Caco-2 (cell line): ENCODE measurements at regions of chr13 and their contacts with region 1.

Region 1: GRCh38 chr13:110715395-110716235 is 2.1 kb downstream of the ING1 start:
- DNase-seq: peak; percentile 98 to 100
- H3K4me3 ChIP-seq: peak overlapping the region; percentile 93
- H3K4me3 Mint-ChIP-seq: peak overlapping the region; percentile 100
- H3K27ac Mint-ChIP-seq: peak overlapping the region; percentile 96
- H3K4me1 ChIP-seq: peaks cover 16% of the 10 kb centered on the region; the same call in 1 of the 2 replicates
- H3K4me1 Mint-ChIP-seq: peaks cover 17% of the 10 kb centered on the region
- H3K27me3 ChIP-seq: no peaks in the 10 kb centered on the region
- H3K27me3 Mint-ChIP-seq: peaks cover 2% of the 10 kb centered on the region
- CTCF ChIP-seq: peak in 1 of 2 experiments; percentile 18

Region 2: DNA sequence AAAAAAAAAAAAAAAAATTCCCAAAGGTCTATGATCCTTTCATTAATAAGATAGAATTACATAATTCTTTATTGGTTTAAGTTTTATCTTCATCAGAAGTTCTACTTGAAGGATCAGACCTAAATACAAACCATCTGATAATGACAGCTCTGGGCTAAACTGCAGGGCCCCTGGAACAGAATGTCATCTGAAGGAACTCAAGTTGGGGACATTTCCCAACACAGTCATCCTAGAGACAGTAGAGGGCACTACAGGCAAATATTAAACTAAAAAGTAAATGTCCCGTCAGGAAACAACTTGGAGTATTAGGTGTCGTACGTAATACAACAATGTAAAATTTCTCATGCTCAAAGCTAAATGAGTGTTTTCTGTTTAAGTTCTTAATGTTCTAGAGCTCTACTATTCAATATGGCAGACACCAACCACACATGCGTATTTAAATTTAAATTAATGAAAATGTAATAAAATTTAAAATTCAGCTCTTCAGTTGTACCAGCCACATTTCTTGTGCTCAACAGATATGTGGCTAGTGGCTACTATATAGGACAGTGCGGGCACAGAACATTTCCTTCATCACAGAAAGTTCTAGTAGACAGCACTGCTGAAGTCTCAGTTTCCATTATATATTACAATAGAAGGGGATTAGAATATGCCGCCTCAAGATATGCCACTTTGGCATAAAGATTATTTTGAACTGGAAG is 122.0 kb before region 1 on chr13:
- CTCF ChIA-PET with region 1: interaction called, 5 read pairs
- POLR2A ChIA-PET with region 1: interaction called, 5 read pairs
- intact Hi-C with region 1: loop called (anchors 2 kb)
- DNase-seq: peak in 1 of 2 experiments; percentile 67
- H3K4me3 ChIP-seq: no peak overlapping the region
- H3K4me3 Mint-ChIP-seq: no peak overlapping the region
- H3K27ac Mint-ChIP-seq: no peak overlapping the region
- H3K4me1 ChIP-seq: peaks cover 12% of the 10 kb centered on the region
- H3K4me1 Mint-ChIP-seq: peaks cover 23% of the 10 kb centered on the region
- H3K27me3 ChIP-seq: no peaks in the 10 kb centered on the region
- H3K27me3 Mint-ChIP-seq: no peaks in the 10 kb centered on the region
- CTCF ChIP-seq: peak; percentile 63 to 64

Region 3: GRCh38 chr13:110615322-110616102 is 100.1 kb before region 1 on chr13 and contains the start of gene NAXD:
- CTCF ChIA-PET with region 1: interaction called, 6 read pairs
- POLR2A ChIA-PET with region 1: interaction called, 7 read pairs
- intact Hi-C with region 1: loop called (anchors 2 kb)
- DNase-seq: peak; percentile 97 to 98
- H3K4me3 ChIP-seq: peak within 1 kb of the TSS; percentile 96
- H3K4me3 Mint-ChIP-seq: peak within 1 kb of the TSS; percentile 88
- H3K27ac Mint-ChIP-seq: peak within 1 kb of the TSS; percentile 96
- H3K4me1 ChIP-seq: peaks cover 33% of the 10 kb centered on the region
- H3K4me1 Mint-ChIP-seq: peaks cover 5% of the 10 kb centered on the region
- H3K27me3 ChIP-seq: no peaks in the 10 kb centered on the region
- H3K27me3 Mint-ChIP-seq: no peaks in the 10 kb centered on the region
- CTCF ChIP-seq: no peak
- total RNA-seq, gene NAXD: 48.8 and 51.5 TPM in 2 replicates

Region 4: GRCh38 chr13:110665491-110666254 is 49.9 kb before region 1 on chr13:
- CTCF ChIA-PET with region 1: no interaction called
- POLR2A ChIA-PET with region 1: no interaction called
- intact Hi-C with region 1: no loop called
- DNase-seq: no peak
- H3K4me3 ChIP-seq: no peak overlapping the region
- H3K4me3 Mint-ChIP-seq: no peak overlapping the region
- H3K27ac Mint-ChIP-seq: no peak overlapping the region
- H3K4me1 ChIP-seq: no peaks in the 10 kb centered on the region
- H3K4me1 Mint-ChIP-seq: no peaks in the 10 kb centered on the region
- H3K27me3 ChIP-seq: no peaks in the 10 kb centered on the region
- H3K27me3 Mint-ChIP-seq: no peaks in the 10 kb centered on the region
- CTCF ChIP-seq: no peak

Region 5: GRCh38 chr13:110680851-110681250 is 34.8 kb before region 1 on chr13:
- CTCF ChIA-PET with region 1: interaction called, 3 read pairs
- POLR2A ChIA-PET with region 1: interaction called, 4 read pairs
- intact Hi-C with region 1: loop called (anchors 1 kb)
- DNase-seq: peak in 1 of 2 experiments; percentile 57
- H3K4me3 ChIP-seq: no peak overlapping the region
- H3K4me3 Mint-ChIP-seq: no peak overlapping the region
- H3K27ac Mint-ChIP-seq: no peak overlapping the region
- H3K4me1 ChIP-seq: no peaks in the 10 kb centered on the region; the same call in 1 of the 2 replicates
- H3K4me1 Mint-ChIP-seq: peaks cover 6% of the 10 kb centered on the region
- H3K27me3 ChIP-seq: no peaks in the 10 kb centered on the region
- H3K27me3 Mint-ChIP-seq: no peaks in the 10 kb centered on the region
- CTCF ChIP-seq: peak; percentile 55 to 63

Region 6: DNA sequence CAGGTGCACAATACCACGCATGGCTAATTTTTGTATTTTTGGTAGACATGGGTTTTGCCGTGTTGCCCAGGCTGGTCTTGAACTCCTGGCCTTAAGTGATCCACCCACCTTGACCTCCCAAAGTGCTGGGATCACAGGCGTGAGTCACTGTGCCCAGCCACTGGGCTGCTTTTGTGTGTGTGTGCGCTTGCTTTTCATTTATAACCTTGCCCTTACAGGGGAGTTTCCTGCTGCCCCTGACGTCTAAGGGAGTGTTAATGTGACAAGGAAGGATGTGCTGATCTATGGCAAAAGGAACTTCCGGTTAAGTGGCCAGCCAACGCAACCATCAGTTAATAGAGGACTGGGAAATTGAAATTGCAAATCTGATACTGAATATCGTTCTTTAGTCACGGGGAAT is 55.6 kb after region 1 on chr13:
- CTCF ChIA-PET with region 1: no interaction called
- POLR2A ChIA-PET with region 1: interaction called, 11 read pairs
- intact Hi-C with region 1: no loop called
- DNase-seq: no peak
- H3K4me3 ChIP-seq: no peak overlapping the region
- H3K4me3 Mint-ChIP-seq: no peak overlapping the region
- H3K27ac Mint-ChIP-seq: no peak overlapping the region
- H3K4me1 ChIP-seq: no peaks in the 10 kb centered on the region
- H3K4me1 Mint-ChIP-seq: no peaks in the 10 kb centered on the region
- H3K27me3 ChIP-seq: no peaks in the 10 kb centered on the region; the same call in 1 of the 2 replicates
- H3K27me3 Mint-ChIP-seq: peaks cover 16% of the 10 kb centered on the region
- CTCF ChIP-seq: no peak

Region 7: GRCh38 chr13:110819203-110820014 is 103.8 kb after region 1 on chr13:
- CTCF ChIA-PET with region 1: no interaction called
- POLR2A ChIA-PET with region 1: interaction called, 3 read pairs
- intact Hi-C with region 1: loop called (anchors 1 kb)
- DNase-seq: peak; percentile 72 to 85
- H3K4me3 ChIP-seq: no peak overlapping the region
- H3K4me3 Mint-ChIP-seq: no peak overlapping the region
- H3K27ac Mint-ChIP-seq: no peak overlapping the region
- H3K4me1 ChIP-seq: 0 out of 2 replicates have a peak, but pooled peaks cover 4% of the 10 kb centered on the region
- H3K4me1 Mint-ChIP-seq: no peaks in the 10 kb centered on the region
- H3K27me3 ChIP-seq: no peaks in the 10 kb centered on the region
- H3K27me3 Mint-ChIP-seq: no peaks in the 10 kb centered on the region
- CTCF ChIP-seq: peak; percentile 95 to 96